ENCODE measurements at regions of chr17 and their contacts with region 1.

Region 1: DNA sequence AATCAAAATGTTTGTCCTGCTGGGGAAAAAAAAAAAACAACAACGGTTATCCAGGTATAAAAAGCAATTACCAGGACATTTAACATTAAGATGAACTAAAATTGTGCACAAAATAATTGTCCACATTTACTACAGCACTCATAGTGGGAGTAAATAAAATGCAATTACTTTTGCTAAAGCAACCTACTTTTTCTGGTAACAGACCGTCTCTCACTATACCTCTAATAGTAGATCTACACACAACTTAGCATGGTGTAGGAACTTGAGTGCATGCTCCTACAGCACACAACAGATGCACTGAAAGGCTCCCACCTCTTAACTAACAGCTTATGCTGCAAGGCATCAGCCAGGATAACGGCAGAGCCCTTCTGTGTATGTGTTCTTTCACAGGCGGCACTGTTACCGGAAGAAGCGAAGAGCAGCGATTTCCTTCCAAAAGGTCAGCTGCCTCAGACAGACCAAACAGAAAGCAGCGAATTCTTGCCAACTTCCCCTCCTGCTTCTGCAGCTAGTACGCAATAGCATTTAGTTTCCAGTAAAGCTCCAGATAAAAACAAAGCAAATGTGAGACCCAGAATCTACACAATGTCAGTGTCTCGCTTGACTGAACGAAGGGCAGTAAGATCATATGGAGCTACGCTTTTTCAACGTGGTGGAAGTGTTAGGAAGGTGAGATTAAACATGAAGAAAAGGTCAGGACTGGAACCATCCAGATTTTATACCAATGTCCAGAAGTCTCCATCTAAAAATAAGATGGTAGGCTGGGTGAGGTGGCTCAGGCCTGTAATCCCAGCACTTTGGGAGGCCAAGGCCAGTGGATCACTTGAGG is 27.6 kb downstream of the STAT5B start:
- DNase-seq: peak; percentile 82 to 95 (median 88)
- H3K4me3 ChIP-seq: peak overlapping the region; percentile 20 to 45
- H3K4me3 Mint-ChIP-seq: peak overlapping the region; percentile 78 to 96 (median 85)
- H3K27ac ChIP-seq: peak overlapping the region; percentile 90
- H3K27ac Mint-ChIP-seq: peak overlapping the region; percentile 92 to 99 (median 98)
- H3K4me1 ChIP-seq: peaks cover 78% of the 10 kb centered on the region
- H3K4me1 Mint-ChIP-seq: peaks cover 55 to 81% (median 68%) of the 10 kb centered on the region in 4 donors
- H3K27me3 ChIP-seq: no peaks in the 10 kb centered on the region
- H3K27me3 Mint-ChIP-seq: no peaks in the 10 kb centered on the region

Region 2: GRCh38 chr17:41918314-41919164 is 330.0 kb before region 1 on chr17 and contains the start of gene ACLY:
- CTCF ChIA-PET with region 1: no interaction called
- POLR2A ChIA-PET with region 1: no interaction called
- intact Hi-C with region 1: no loop called
- DNase-seq: peak; percentile 93 to 94 (median 93)
- H3K4me3 ChIP-seq: peak within 1 kb of the TSS; percentile 78 to 97
- H3K4me3 Mint-ChIP-seq: peak within 1 kb of the TSS; percentile 87 to 96 (median 90)
- H3K27ac ChIP-seq: peak within 1 kb of the TSS; percentile 88
- H3K27ac Mint-ChIP-seq: peak within 1 kb of the TSS; percentile 76 to 93 (median 87)
- H3K4me1 ChIP-seq: peaks cover 48% of the 10 kb centered on the region
- H3K4me1 Mint-ChIP-seq: peaks cover 23 to 46% (median 33%) of the 10 kb centered on the region in 4 donors
- H3K27me3 ChIP-seq: no peaks in the 10 kb centered on the region
- H3K27me3 Mint-ChIP-seq: no peaks in the 10 kb centered on the region
- total RNA-seq, gene ACLY: 84.4 to 88.5 TPM

Region 3: DNA sequence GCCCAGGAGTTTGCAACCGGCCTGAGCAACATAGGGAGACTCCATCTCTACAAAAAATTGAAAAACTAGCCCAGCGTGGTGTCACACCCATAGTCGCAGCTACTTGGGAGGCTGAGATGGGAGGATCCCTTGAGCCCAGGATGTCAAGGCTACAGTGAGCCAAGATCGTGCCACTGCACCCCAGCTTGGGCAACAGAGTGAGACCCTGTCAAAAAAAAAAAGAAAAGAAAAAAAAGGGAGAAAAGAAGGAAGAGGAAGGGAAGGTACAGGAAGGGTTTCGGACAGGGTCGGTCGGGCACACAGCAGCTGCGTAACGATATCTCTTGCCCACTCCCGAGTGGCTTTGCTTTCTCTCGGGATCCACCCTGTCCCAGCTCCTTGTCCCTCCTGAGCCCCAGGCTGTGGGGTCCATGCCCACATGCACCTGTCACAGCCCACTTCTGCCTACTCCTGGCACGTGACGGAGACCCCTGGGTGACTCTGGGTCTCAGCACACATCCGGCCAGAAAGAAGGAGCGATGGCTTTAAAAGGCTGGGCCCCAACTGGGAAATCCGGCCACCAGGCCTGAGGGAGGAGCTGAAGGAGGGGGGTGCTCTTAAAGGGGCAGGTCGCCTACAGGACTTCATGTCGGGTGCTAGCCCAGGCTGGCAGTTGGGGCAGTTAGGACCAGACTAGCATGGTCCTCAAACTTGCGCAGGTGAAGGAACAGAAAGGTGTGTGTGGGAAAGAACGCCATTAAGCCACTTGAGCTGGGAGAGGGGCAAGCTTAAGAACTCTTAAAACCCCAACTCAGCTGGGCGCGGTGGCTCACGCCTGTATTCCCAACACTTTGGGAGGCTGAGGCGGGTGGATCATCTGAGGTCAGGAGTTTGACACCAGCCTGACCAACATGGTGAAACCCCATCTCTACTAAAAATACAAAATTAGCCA is 54.3 kb before region 1 on chr17 and contains the start of gene GHDC:
- CTCF ChIA-PET with region 1: interaction called, 3 read pairs
- POLR2A ChIA-PET with region 1: interaction called, 28 read pairs
- intact Hi-C with region 1: no loop called
- DNase-seq: peak; percentile 75 to 84 (median 76)
- H3K4me3 ChIP-seq: peak within 1 kb of the TSS; percentile 64 to 97
- H3K4me3 Mint-ChIP-seq: peak within 1 kb of the TSS; percentile 82 to 96 (median 93)
- H3K27ac ChIP-seq: peak within 1 kb of the TSS; percentile 70
- H3K27ac Mint-ChIP-seq: peak within 1 kb of the TSS; percentile 60 to 95 (median 89)
- H3K4me1 ChIP-seq: peaks cover 20% of the 10 kb centered on the region
- H3K4me1 Mint-ChIP-seq: peaks cover 15 to 25% (median 20%) of the 10 kb centered on the region in 4 donors
- H3K27me3 ChIP-seq: no peaks in the 10 kb centered on the region
- H3K27me3 Mint-ChIP-seq: no peaks in the 10 kb centered on the region
- total RNA-seq, gene GHDC: 23.9 to 25.3 TPM

Region 4: GRCh38 chr17:42260318-42260717 is 11.8 kb after region 1 on chr17:
- CTCF ChIA-PET with region 1: interaction called, 4 read pairs
- POLR2A ChIA-PET with region 1: interaction called, 286 read pairs
- intact Hi-C with region 1: no loop called
- DNase-seq: no peak
- H3K4me3 ChIP-seq: no peak overlapping the region
- H3K4me3 Mint-ChIP-seq: no peak overlapping the region
- H3K27ac ChIP-seq: no peak overlapping the region
- H3K27ac Mint-ChIP-seq: peak overlapping the region in 2 of 7 donors; percentile 29 to 42
- H3K4me1 ChIP-seq: peaks cover 46% of the 10 kb centered on the region
- H3K4me1 Mint-ChIP-seq: peaks cover 24 to 55% (median 36%) of the 10 kb centered on the region in 4 donors
- H3K27me3 ChIP-seq: no peaks in the 10 kb centered on the region
- H3K27me3 Mint-ChIP-seq: no peaks in the 10 kb centered on the region

Region 5: GRCh38 chr17:42276359-42276608 is 27.7 kb after region 1 on chr17 and contains the start of gene STAT5B:
- CTCF ChIA-PET with region 1: interaction called, 35 read pairs
- POLR2A ChIA-PET with region 1: interaction called, 286 read pairs
- intact Hi-C with region 1: loop called (anchors 1 kb)
- DNase-seq: peak in 4 of 5 donors; percentile 73 to 82 (median 76)
- H3K4me3 ChIP-seq: peak within 1 kb of the TSS; percentile 87 to 97
- H3K4me3 Mint-ChIP-seq: peak within 1 kb of the TSS; percentile 97 to 100 (median 98)
- H3K27ac ChIP-seq: peak within 1 kb of the TSS; percentile 92
- H3K27ac Mint-ChIP-seq: peak within 1 kb of the TSS; percentile 97 to 100 (median 99)
- H3K4me1 ChIP-seq: peaks cover 42% of the 10 kb centered on the region
- H3K4me1 Mint-ChIP-seq: peaks cover 31 to 58% (median 46%) of the 10 kb centered on the region in 4 donors
- H3K27me3 ChIP-seq: no peaks in the 10 kb centered on the region
- H3K27me3 Mint-ChIP-seq: no peaks in the 10 kb centered on the region
- total RNA-seq, gene STAT5B: 244 to 261 TPM

Region 6: GRCh38 chr17:42312285-42313130 is 63.9 kb after region 1 on chr17:
- CTCF ChIA-PET with region 1: interaction called, 9 read pairs
- POLR2A ChIA-PET with region 1: interaction called, 19 read pairs
- intact Hi-C with region 1: no loop called
- DNase-seq: peak; percentile 69 to 80 (median 73)
- H3K4me3 ChIP-seq: peak overlapping the region in 1 of 2 donors; percentile 11
- H3K4me3 Mint-ChIP-seq: peak overlapping the region; percentile 37 to 80 (median 70)
- H3K27ac ChIP-seq: peak overlapping the region; percentile 46
- H3K27ac Mint-ChIP-seq: peak overlapping the region; percentile 75 to 89 (median 86)
- H3K4me1 ChIP-seq: peaks cover 70% of the 10 kb centered on the region
- H3K4me1 Mint-ChIP-seq: peaks cover 40 to 75% (median 53%) of the 10 kb centered on the region in 4 donors
- H3K27me3 ChIP-seq: no peaks in the 10 kb centered on the region
- H3K27me3 Mint-ChIP-seq: no peaks in the 10 kb centered on the region

Measured in CD4-positive, alpha-beta memory T cell (primary cell).